Gastrocnemius medialis (tissue), 4 donors: ENCODE measurements at regions of chr14 and their contacts with region 1.

Region 1: DNA sequence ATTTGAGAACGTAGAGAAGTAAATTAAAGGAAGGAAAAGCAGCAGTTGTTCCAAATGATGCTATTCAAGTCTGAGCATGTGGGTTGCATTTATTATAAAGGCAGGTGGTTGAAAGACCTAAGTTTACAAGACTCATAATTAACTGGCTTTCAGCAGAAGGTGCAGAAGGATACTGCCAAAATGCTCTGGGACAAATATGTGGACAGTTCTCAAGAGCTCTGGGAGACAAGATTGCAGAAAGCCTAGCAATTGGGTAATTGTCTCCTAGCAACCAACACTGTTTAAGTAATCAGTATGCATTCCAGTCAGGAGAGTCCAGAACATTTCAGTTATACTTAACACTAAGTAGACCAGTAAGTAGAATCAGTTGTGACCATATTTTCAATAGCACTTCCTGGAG is 131.5 kb downstream of the GPR135 start:
- DNase-seq: peak; percentile 15 to 33
- ATAC-seq: peak; percentile 90 to 98
- H3K4me3 ChIP-seq: no peak overlapping the region
- H3K27ac ChIP-seq: peak overlapping the region; percentile 24 to 72 (median 59)
- H3K4me1 ChIP-seq: peaks cover 55 to 59% of the 10 kb centered on the region in 2 donors
- H3K27me3 ChIP-seq: no peaks in the 10 kb centered on the region
- CTCF ChIP-seq: no peak
- POLR2A ChIP-seq: no peak

Region 2: DNA sequence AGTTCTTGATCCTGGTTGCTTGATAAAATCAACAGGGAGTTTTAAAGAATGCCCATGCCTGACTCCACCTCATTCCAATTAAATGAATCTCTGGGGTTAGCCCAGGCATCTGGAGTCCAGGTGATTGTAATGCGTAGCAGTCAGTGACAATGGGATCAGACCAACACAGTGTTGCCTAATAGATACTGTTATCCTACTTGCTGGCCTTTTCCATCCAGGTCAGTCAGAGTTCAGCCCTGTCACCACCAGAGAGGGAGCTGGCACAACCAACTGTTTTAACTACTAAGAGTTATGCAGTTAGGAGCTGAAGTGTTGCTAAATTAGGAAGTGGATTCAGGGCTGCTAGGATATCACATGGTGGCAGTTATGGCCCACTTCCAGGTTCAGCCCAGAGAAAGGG is 24.4 kb after region 1 on chr14:
- in situ Hi-C with region 1: no loop called
- intact Hi-C with region 1: loop called (anchors 2 kb)
- DNase-seq: peak; percentile 14 to 76
- ATAC-seq: peak; percentile 46 to 83
- H3K4me3 ChIP-seq: no peak overlapping the region
- H3K27ac ChIP-seq: peak overlapping the region; percentile 47 to 81 (median 62)
- H3K4me1 ChIP-seq: peaks cover 43 to 58% of the 10 kb centered on the region in 2 donors
- H3K27me3 ChIP-seq: no peaks in the 10 kb centered on the region
- CTCF ChIP-seq: no peak
- POLR2A ChIP-seq: no peak

Region 3: GRCh38 chr14:59407246-59408010 is 73.8 kb after region 1 on chr14:
- in situ Hi-C with region 1: no loop called
- intact Hi-C with region 1: no loop called
- DNase-seq: no peak
- ATAC-seq: peak; percentile 62 to 78
- H3K4me3 ChIP-seq: no peak overlapping the region
- H3K27ac ChIP-seq: peak overlapping the region; percentile 5 to 65 (median 56)
- H3K4me1 ChIP-seq: peaks cover 0 to 11% of the 10 kb centered on the region in 2 donors
- H3K27me3 ChIP-seq: no peaks in the 10 kb centered on the region
- CTCF ChIP-seq: no peak
- POLR2A ChIP-seq: no peak

Region 4: GRCh38 chr14:59454131-59454530 is 120.5 kb after region 1 on chr14:
- in situ Hi-C with region 1: no loop called
- intact Hi-C with region 1: loop called (anchors 10 kb)
- DNase-seq: no peak
- ATAC-seq: peak; percentile 54 to 76
- H3K4me3 ChIP-seq: no peak overlapping the region
- H3K27ac ChIP-seq: no peak overlapping the region
- H3K4me1 ChIP-seq: no peaks in the 10 kb centered on the region
- H3K27me3 ChIP-seq: no peaks in the 10 kb centered on the region
- CTCF ChIP-seq: no peak
- POLR2A ChIP-seq: no peak